ENCODE measurements at regions of chr2 and their contacts with region 1.

Region 1: GRCh38 chr2:151261231-151261976 is at the start of gene RBM43:
- DNase-seq: peak; percentile 97
- H3K4me3 ChIP-seq: peak within 1 kb of the TSS; percentile 85
- H3K27ac ChIP-seq: peak within 1 kb of the TSS; percentile 93
- H3K4me1 ChIP-seq: peaks cover 21% of the 10 kb centered on the region
- H3K27me3 ChIP-seq: no peaks in the 10 kb centered on the region
- total RNA-seq, gene RBM43: 6.8 and 7.3 TPM in 2 replicates

Region 2: GRCh38 chr2:149365826-149366583 is 1895.4 kb before region 1 on chr2:
- in situ Hi-C with region 1: no loop called
- DNase-seq: peak; percentile 55
- H3K4me3 ChIP-seq: no peak overlapping the region
- H3K27ac ChIP-seq: no peak overlapping the region
- H3K4me1 ChIP-seq: peaks cover 16% of the 10 kb centered on the region
- H3K27me3 ChIP-seq: no peaks in the 10 kb centered on the region

Region 3: GRCh38 chr2:151409601-151410484 is 148.4 kb after region 1 on chr2 and contains the start of gene RIF1:
- in situ Hi-C with region 1: loop called (anchors 10 kb)
- DNase-seq: peak; percentile 98
- H3K4me3 ChIP-seq: peak within 1 kb of the TSS; percentile 99
- H3K27ac ChIP-seq: peak within 1 kb of the TSS; percentile 90
- H3K4me1 ChIP-seq: peaks cover 12% of the 10 kb centered on the region; the same call in 1 of the 2 replicates
- H3K27me3 ChIP-seq: no peaks in the 10 kb centered on the region
- total RNA-seq, gene RIF1: 20.9 and 24.8 TPM in 2 replicates

Region 4: GRCh38 chr2:151669585-151670081 is 408.2 kb after region 1 on chr2:
- in situ Hi-C with region 1: no loop called
- DNase-seq: no peak
- H3K4me3 ChIP-seq: no peak overlapping the region
- H3K27ac ChIP-seq: no peak overlapping the region
- H3K4me1 ChIP-seq: no peaks in the 10 kb centered on the region
- H3K27me3 ChIP-seq: no peaks in the 10 kb centered on the region

Region 5: DNA sequence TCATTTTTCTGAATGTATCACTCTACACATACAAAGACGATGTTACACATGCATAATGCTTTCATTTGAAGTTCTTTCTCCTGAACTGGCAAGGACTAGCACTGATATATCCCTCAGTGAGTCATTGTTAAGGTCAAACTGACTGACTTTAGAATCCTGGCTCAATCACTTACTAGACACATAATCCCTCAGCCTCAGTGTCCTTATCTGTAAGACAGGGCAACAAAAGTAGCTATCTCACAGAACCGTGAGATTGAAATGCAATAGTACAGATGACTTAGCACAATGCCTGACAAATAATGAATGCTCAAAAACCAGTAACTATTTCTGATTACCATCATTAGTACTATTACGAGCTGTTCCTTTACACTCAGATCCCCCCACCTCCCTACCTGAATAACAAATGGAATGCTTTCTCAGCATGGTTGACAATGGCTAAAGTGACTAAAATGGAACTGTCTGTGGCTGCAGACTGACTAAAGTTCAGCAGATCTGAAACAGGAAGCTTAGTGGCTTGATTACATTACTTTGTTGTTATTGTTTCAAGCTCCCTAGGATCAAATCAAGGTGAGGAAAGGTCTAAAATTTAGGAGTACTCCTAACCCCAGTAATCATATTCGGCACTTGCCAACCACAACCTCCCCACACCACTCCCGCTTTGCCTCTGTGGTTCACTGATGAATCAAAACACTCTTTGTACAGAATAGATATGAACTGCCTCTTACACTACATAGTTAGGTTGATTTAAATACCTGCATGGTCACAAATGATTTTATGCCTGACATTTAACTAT is 873.3 kb after region 1 on chr2:
- in situ Hi-C with region 1: no loop called
- DNase-seq: peak; percentile 53
- H3K4me3 ChIP-seq: no peak overlapping the region
- H3K27ac ChIP-seq: no peak overlapping the region
- H3K4me1 ChIP-seq: peaks cover 11% of the 10 kb centered on the region
- H3K27me3 ChIP-seq: no peaks in the 10 kb centered on the region